Esophagus squamous epithelium (tissue), 5 donors: ENCODE measurements at regions of chr6 and their contacts with region 1.

Region 1: GRCh38 chr6:27893059-27893835 is 18.9 kb downstream of the OR2B2 start:
- DNase-seq: peak; percentile 31
- H3K4me3 ChIP-seq: peak overlapping the region; percentile 29 to 75 (median 64)
- H3K27ac ChIP-seq: peak overlapping the region; percentile 82 to 93 (median 92)
- H3K4me1 ChIP-seq: peaks cover 8 to 63% (median 10%) of the 10 kb centered on the region in 3 donors
- H3K27me3 ChIP-seq: peaks cover 0 to 45% (median 3%) of the 10 kb centered on the region in 4 donors
- CTCF ChIP-seq: peak in 2 of 6 experiments; percentile 14 to 19
- POLR2A ChIP-seq: peak in 3 of 4 donors; percentile 86 to 97 (median 97)

Region 2: DNA sequence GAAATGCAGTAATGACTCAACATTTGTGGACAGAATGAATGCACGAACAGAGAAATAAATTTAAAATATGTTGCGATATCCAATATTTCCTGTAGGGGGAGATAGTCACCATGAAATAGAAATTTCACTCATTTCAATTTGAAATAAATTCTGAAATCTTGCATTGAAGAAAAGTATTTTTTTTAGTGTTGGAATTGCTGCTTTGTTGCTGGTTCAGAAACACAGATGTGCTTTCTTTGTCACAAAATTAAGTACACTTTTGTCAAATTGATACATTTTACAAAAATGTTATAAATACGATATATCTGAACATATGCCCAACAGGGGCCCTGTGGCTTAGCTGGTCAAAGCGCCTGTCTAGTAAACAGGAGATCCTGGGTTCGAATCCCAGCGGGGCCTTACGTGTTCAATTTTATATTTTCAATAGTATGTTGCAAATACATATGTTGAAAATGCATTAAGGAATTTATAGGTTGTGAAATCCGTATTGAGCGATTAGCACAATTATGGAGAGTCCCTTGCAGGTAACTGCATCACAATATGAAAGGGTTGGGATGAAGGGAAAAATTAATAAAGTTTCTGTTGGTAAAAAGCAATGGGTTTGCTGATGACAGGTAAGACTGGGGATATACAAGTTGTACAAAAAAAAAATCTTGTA is 731.2 kb before region 1 on chr6:
- intact Hi-C with region 1: loop called (anchors 10 kb)
- DNase-seq: no peak
- H3K4me3 ChIP-seq: no peak overlapping the region
- H3K27ac ChIP-seq: no peak overlapping the region
- H3K4me1 ChIP-seq: peaks cover 0 to 15% (median 0%) of the 10 kb centered on the region in 3 donors
- H3K27me3 ChIP-seq: no peaks in the 10 kb centered on the region
- CTCF ChIP-seq: peak; percentile 55 to 81 (median 77)
- POLR2A ChIP-seq: no peak

Region 3: GRCh38 chr6:27809939-27810767 is 83.1 kb before region 1 on chr6:
- intact Hi-C with region 1: loop called (anchors 5 kb)
- DNase-seq: no peak
- H3K4me3 ChIP-seq: peak overlapping the region; percentile 63 to 80 (median 68)
- H3K27ac ChIP-seq: peak overlapping the region; percentile 93 to 97 (median 96)
- H3K4me1 ChIP-seq: peaks cover 7 to 69% (median 9%) of the 10 kb centered on the region in 3 donors
- H3K27me3 ChIP-seq: peaks cover 0 to 11% (median 0%) of the 10 kb centered on the region in 4 donors
- CTCF ChIP-seq: peak in 1 of 6 experiments; percentile 14
- POLR2A ChIP-seq: peak in 3 of 4 donors; percentile 90 to 99 (median 99)